ENCODE measurements at regions of chr1 and their contacts with region 1.

Region 1: DNA sequence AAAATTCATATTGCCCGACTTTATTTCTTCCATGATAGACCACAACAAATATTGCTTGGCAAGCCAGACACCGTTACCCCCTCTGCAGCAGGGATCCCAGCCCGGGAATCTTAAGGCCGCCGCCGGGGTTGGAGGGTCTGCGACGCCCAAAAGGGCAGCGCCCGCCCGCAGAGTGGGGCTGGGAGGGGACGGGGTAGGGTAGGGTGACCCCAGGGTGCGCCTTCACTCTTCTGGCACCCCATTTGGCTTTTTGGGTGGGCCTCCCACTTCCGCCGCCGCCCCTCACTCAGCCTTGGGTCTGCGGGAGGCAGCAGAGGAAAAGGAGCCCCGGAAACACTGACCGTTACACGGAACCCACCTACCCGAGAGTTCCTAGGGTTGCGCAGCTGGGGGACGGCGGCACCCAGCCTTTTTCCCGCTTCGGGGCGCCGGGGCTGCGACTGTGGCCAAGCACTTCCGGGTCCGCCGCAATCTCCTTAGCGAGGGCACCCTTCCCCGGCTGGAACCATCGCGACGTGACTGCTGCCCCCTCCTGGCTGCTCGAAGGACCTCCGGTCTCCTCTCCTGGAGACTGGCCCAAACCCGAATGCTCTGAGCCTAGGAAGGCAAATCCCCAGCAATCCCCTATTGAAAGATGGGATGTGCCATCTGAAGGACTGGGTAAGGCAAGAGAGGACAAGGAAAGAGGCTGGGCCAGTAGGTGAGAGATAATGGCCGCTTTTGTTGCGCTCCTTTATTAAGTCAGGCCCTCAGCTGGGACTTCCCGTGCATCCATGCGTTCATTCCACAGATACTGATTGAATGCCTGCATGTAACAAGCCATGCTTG is at the start of gene PIGC:
- DNase-seq: peak; percentile 73
- ATAC-seq: peak; percentile 98
- H3K4me3 ChIP-seq: peak within 1 kb of the TSS; percentile 82 to 93 (median 87)
- H3K27ac ChIP-seq: peak within 1 kb of the TSS; percentile 66
- H3K4me1 ChIP-seq: peaks cover 44% of the 10 kb centered on the region
- H3K27me3 ChIP-seq: no peaks in the 10 kb centered on the region
- CTCF ChIP-seq: peak; percentile 97
- EP300 ChIP-seq: no peak; a peak in 1 of 4 replicates
- POLR2A ChIP-seq: peak; percentile 65 to 68
- RAD21 ChIP-seq: peak; percentile 71
- total RNA-seq, gene PIGC: 24.1 and 29.5 TPM in 2 replicates

Region 2: DNA sequence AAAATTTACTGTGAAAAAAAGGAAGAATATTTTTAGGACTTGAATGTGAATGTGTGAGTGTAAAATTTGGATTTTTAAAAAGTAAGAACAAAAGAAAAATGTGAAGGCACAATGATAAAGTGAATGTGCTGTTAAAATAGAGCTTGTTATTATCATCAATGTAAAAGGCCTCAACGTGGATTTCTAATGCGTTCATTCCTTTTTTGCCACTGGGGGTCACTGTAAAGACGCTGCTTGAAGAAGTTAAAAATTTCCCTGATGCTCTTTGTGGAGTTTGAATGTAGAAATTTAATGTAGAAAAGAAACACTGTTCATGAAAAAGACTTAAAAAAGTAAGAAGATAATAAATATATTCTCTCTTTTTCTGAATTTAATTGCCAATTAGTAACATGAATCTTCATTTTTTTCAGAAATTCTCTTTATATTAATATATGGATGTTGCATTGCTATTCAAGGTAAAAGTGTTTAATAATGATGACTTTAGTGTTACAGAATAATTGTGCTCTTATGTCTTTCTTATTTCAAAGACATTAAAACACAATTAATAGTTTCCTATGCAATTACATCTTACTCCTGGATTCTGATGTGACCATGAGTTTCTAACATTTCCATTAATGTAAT is 441.0 kb before region 1 on chr1:
- CTCF ChIA-PET with region 1: interaction called, 4 read pairs
- POLR2A ChIA-PET with region 1: no interaction called
- in situ Hi-C with region 1: no loop called
- intact Hi-C with region 1: loop called (anchors 2 kb)
- DNase-seq: peak; percentile 37
- ATAC-seq: no peak
- H3K4me3 ChIP-seq: no peak overlapping the region
- H3K27ac ChIP-seq: no peak overlapping the region
- H3K4me1 ChIP-seq: peaks cover 12% of the 10 kb centered on the region
- H3K27me3 ChIP-seq: no peaks in the 10 kb centered on the region
- CTCF ChIP-seq: peak; percentile 64
- EP300 ChIP-seq: no peak
- POLR2A ChIP-seq: no peak
- RAD21 ChIP-seq: no peak

Region 3: GRCh38 chr1:172408958-172409357 is 34.9 kb before region 1 on chr1:
- CTCF ChIA-PET with region 1: no interaction called
- POLR2A ChIA-PET with region 1: no interaction called
- in situ Hi-C with region 1: no loop called
- intact Hi-C with region 1: no loop called
- DNase-seq: no peak
- ATAC-seq: no peak
- H3K4me3 ChIP-seq: no peak overlapping the region
- H3K27ac ChIP-seq: no peak overlapping the region
- H3K4me1 ChIP-seq: no peaks in the 10 kb centered on the region
- H3K27me3 ChIP-seq: no peaks in the 10 kb centered on the region
- CTCF ChIP-seq: no peak
- EP300 ChIP-seq: no peak
- POLR2A ChIP-seq: no peak
- RAD21 ChIP-seq: no peak

Region 4: DNA sequence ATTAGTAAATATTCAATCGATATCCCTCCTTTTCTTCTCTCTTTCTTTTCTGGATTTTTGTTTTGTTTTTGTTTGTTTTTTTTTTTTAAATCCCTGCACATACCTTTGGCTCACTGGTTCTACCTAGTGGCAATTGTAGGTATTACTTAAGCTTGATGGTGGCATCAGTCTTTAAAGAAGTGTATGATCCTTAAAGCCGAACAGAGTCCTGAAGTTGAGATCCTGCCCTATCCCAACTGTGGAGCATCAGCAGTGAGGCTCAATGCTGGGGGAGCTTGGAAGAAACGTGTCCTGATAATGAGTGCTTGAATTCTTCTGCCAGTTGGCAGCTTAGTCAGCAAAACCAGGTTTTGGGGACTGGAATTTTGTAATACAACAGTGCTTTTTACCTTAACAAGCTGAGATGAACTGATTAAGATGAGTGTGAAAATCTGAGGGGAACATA is 275.9 kb after region 1 on chr1:
- CTCF ChIA-PET with region 1: no interaction called
- POLR2A ChIA-PET with region 1: interaction called, 10 read pairs
- in situ Hi-C with region 1: loop called (anchors 5 kb)
- intact Hi-C with region 1: no loop called
- DNase-seq: peak; percentile 44
- ATAC-seq: peak; percentile 74; the same call in 2 of the 3 replicates
- H3K4me3 ChIP-seq: no peak overlapping the region
- H3K27ac ChIP-seq: no peak overlapping the region
- H3K4me1 ChIP-seq: peaks cover 25% of the 10 kb centered on the region
- H3K27me3 ChIP-seq: no peaks in the 10 kb centered on the region
- CTCF ChIP-seq: peak; percentile 67
- EP300 ChIP-seq: no peak
- POLR2A ChIP-seq: no peak
- RAD21 ChIP-seq: peak; percentile 30; the same call in 1 of the 2 replicates